ENCODE measurements at regions of chr1 and their contacts with region 1.

Region 1: GRCh38 chr1:16613185-16614147 is at the start of gene NBPF1:
- DNase-seq: peak; percentile 91
- H3K4me3 Mint-ChIP-seq: no peak within 1 kb of the TSS
- H3K27ac Mint-ChIP-seq: no peak within 1 kb of the TSS
- H3K4me1 Mint-ChIP-seq: no peaks in the 10 kb centered on the region
- H3K27me3 Mint-ChIP-seq: no peaks in the 10 kb centered on the region
- total RNA-seq, gene NBPF1: 1.9 to 2.4 TPM

Region 2: GRCh38 chr1:16434501-16434900 is 179.0 kb before region 1 on chr1:
- CTCF ChIA-PET with region 1: no interaction called
- POLR2A ChIA-PET with region 1: no interaction called
- intact Hi-C with region 1: no loop called
- DNase-seq: peak; percentile 27
- H3K4me3 Mint-ChIP-seq: no peak overlapping the region
- H3K27ac Mint-ChIP-seq: no peak overlapping the region
- H3K4me1 Mint-ChIP-seq: peaks cover 3% of the 10 kb centered on the region
- H3K27me3 Mint-ChIP-seq: no peaks in the 10 kb centered on the region

Region 3: GRCh38 chr1:16644193-16644481 is 30.7 kb after region 1 on chr1:
- CTCF ChIA-PET with region 1: no interaction called
- POLR2A ChIA-PET with region 1: no interaction called
- intact Hi-C with region 1: loop called (anchors 1 kb)
- DNase-seq: no peak
- H3K4me3 Mint-ChIP-seq: no peak overlapping the region
- H3K27ac Mint-ChIP-seq: no peak overlapping the region
- H3K4me1 Mint-ChIP-seq: no peaks in the 10 kb centered on the region
- H3K27me3 Mint-ChIP-seq: peaks cover 3% of the 10 kb centered on the region

Measured in activated CD4-positive, alpha-beta memory T cell treated with anti-CD3 and anti-CD28 coated beads for 36 hours (primary cell).